Colonic mucosa (tissue), 4 donors: ENCODE measurements at regions of chr7 and their contacts with region 1.

Region 1: GRCh38 chr7:87219545-87220025 is at the start of gene TMEM243:
- DNase-seq: peak; percentile 83
- H3K4me3 ChIP-seq: peak within 1 kb of the TSS; percentile 77
- H3K27ac ChIP-seq: peak within 1 kb of the TSS; percentile 84
- H3K4me1 ChIP-seq: no peaks in the 10 kb centered on the region
- H3K27me3 ChIP-seq: no peaks in the 10 kb centered on the region
- CTCF ChIP-seq: no peak
- total RNA-seq, gene TMEM243: 16.4 to 23.1 TPM

Region 2: DNA sequence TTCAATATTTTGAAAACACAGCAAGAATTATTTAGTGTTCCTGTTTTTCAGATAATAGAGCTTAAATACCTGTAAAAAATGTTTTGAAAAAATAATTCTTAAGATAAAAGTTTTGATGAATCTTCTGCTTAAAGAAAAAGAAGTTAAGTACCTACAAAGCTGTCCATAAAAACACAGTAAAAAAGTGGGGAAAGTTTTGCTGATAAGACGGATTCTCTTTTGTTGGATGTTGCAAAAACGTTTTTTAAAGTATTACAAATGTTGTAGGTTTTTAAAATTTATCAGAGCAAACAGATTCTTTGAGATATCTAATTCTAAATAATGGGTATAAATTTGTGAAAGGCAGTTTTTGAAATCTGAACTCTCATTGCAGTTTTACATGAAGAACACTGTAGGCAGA is 55.2 kb before region 1 on chr7:
- intact Hi-C with region 1: loop called (anchors 10 kb)
- DNase-seq: no peak
- H3K4me3 ChIP-seq: no peak overlapping the region
- H3K27ac ChIP-seq: no peak overlapping the region
- H3K4me1 ChIP-seq: no peaks in the 10 kb centered on the region
- H3K27me3 ChIP-seq: no peaks in the 10 kb centered on the region
- CTCF ChIP-seq: no peak

Region 3: GRCh38 chr7:87445897-87446296 is 226.3 kb after region 1 on chr7:
- intact Hi-C with region 1: no loop called
- DNase-seq: no peak
- H3K4me3 ChIP-seq: no peak overlapping the region
- H3K27ac ChIP-seq: no peak overlapping the region
- H3K4me1 ChIP-seq: no peaks in the 10 kb centered on the region
- H3K27me3 ChIP-seq: no peaks in the 10 kb centered on the region
- CTCF ChIP-seq: no peak